ENCODE measurements at regions of chr9 and their contacts with region 1.

Region 1: DNA sequence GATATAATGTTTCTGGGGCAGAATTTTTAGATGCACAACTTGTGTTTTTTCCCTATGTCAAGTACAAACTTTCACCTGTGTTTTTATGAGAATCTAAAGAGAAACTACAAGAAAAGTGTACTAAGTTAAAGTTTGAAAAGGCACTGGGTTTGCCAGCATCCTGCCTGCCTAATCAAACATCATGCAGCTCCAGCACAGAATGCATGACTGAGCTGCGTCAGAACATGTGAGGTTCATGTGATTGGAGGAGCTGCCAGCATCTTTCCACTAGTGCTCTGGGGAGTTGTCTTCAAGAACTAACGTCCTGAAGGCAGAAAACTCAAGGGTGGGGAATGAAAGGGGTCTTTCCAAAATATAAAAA is 46.1 kb upstream of the RIC1 start:
- DNase-seq: peak in 3 of 5 donors; percentile 32 to 45 (median 36)
- ATAC-seq: peak; percentile 47 to 83 (median 69)
- H3K4me3 ChIP-seq: no peak overlapping the region
- H3K27ac ChIP-seq: peak overlapping the region in 3 of 12 donors; percentile 21 to 45 (median 23)
- H3K4me1 ChIP-seq: peaks cover 0 to 23% (median 14%) of the 10 kb centered on the region in 12 donors
- H3K27me3 ChIP-seq: no peaks in the 10 kb centered on the region
- CTCF ChIP-seq: no peak
- POLR2A ChIP-seq: no peak

Region 2: DNA sequence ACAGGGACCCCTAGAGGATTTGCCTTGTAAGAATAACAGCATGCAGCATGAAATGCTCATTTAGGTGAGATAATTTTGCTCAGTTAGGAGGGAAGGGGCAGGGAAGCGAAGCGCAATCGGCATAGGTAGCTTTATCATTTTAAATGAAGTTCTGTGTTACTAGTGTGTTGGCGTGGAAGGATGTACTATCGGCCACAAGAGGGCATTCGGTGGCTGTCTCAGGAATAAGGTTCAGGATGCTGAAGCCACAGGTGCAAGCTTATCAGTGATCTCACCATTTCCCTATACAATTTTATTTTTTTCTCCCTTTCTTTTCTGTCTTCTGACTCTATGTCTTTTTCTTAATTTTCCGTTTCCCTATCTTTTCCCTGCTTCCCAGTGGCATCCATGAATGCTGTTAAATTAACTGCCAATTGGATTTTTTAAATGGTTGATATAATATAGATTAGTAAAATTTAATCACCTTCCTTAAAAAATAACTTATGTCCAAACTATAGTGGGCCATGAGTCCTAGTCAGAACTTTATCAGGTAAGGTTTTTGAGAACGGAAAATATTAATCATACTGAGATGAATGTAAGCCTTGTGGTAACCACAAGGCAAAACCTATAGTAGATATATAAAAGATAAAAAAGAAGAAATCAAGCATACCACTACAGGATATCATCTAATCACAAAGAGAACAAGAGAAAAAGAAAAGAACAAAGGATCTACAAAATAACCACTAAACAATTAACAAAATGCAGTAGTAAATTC is 396.2 kb before region 1 on chr9:
- intact Hi-C with region 1: loop called in 1 of 10 experiments (anchors 5 kb)
- DNase-seq: peak in 3 of 5 donors; percentile 27 to 32 (median 29)
- ATAC-seq: peak in 3 of 4 donors; percentile 70 to 76 (median 70)
- H3K4me3 ChIP-seq: no peak overlapping the region
- H3K27ac ChIP-seq: no peak overlapping the region
- H3K4me1 ChIP-seq: no peaks in the 10 kb centered on the region
- H3K27me3 ChIP-seq: peaks cover 0 to 8% (median 0%) of the 10 kb centered on the region in 9 donors
- CTCF ChIP-seq: peak; percentile 44 to 74 (median 69)
- POLR2A ChIP-seq: no peak

Region 3: DNA sequence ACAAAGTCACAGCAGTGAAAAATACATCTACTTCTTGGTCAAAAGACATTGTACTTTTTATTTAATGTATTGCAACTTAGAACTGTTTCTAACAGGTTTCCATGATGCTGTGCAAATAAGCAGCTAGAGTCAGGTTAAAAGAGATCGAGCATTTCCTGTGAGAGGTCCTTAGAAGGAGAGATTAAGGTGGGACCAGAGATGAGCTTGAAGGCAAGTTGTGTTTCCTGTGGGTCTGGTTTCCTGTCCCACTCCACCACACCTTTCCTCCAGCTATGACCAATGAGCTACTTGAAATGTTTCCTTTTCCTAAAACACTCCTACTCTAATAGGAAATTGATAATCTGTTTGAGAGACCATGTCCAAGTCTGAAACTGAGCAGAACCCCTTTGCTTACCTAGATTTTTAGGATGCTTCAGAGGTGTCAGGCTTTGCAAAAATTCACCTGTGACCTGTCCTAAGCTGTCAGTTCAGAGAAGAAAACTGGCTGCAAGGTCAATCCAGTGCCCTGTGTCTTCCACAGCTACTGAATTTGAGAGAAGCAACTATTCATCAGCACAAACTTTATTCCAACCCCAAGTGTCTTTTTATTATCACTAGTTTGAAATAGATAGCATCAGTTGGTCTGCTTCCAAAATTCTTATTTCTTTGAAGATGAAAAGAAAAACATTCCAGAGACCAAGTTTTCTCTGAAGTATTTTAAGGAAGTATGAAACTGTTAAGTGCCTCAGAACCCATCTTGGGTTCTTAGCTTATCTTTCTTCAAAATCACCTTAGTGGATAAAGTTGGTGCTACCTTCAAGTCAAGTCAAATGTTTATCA is 230.0 kb before region 1 on chr9:
- intact Hi-C with region 1: loop called in 1 of 10 experiments (anchors 10 kb)
- DNase-seq: no peak
- ATAC-seq: no peak
- H3K4me3 ChIP-seq: no peak overlapping the region
- H3K27ac ChIP-seq: peak overlapping the region in 1 of 12 donors; percentile 12
- H3K4me1 ChIP-seq: peaks cover 0 to 20% (median 2%) of the 10 kb centered on the region in 12 donors
- H3K27me3 ChIP-seq: no peaks in the 10 kb centered on the region
- CTCF ChIP-seq: no peak
- POLR2A ChIP-seq: no peak

Region 4: DNA sequence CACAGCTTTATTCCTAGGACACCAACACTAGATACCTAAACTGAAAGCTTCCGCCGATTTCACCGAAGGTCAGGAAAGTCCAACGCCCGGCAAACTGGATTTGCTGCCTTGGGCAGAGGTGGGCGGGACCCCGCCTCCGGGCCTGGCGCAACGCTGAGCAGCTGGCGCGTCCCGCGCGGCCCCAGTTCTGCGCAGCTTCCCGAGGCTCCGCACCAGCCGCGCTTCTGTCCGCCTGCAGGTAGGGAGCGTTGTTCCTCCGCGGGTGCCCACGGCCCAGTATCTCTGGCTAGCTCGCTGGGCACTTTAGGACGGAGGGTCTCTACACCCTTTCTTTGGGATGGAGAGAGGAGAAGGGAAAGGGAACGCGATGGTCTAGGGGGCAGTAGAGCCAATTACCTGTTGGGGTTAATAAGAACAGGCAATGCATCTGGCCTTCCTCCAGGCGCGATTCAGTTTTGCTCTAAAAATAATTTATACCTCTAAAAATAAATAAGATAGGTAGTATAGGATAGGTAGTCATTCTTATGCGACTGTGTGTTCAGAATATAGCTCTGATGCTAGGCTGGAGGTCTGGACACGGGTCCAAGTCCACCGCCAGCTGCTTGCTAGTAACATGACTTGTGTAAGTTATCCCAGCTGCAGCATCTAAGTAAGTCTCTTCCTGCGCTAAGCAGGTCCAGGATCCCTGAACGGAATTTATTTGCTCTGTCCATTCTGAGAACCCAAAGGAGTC is 132.3 kb before region 1 on chr9 and contains the start of gene CD274:
- intact Hi-C with region 1: loop called in 2 of 10 experiments (anchors 5 kb)
- DNase-seq: peak; percentile 90 to 95 (median 94)
- ATAC-seq: peak; percentile 96 to 99 (median 98)
- H3K4me3 ChIP-seq: peak within 1 kb of the TSS; percentile 7 to 83 (median 66)
- H3K27ac ChIP-seq: peak within 1 kb of the TSS; percentile 6 to 97 (median 80)
- H3K4me1 ChIP-seq: peaks cover 0 to 85% (median 21%) of the 10 kb centered on the region in 12 donors
- H3K27me3 ChIP-seq: no peaks in the 10 kb centered on the region
- CTCF ChIP-seq: peak; percentile 53 to 88 (median 66)
- POLR2A ChIP-seq: no peak
- total RNA-seq, gene CD274: 11.6 to 54.4 (median 15.7) TPM

Region 5: GRCh38 chr9:5499889-5500398 is 82.9 kb before region 1 on chr9:
- intact Hi-C with region 1: loop called in 2 of 10 experiments (anchors 5 kb)
- DNase-seq: peak in 3 of 5 donors; percentile 35 to 65 (median 60)
- ATAC-seq: peak; percentile 55 to 69 (median 61)
- H3K4me3 ChIP-seq: no peak overlapping the region
- H3K27ac ChIP-seq: peak overlapping the region; percentile 62 to 95 (median 85)
- H3K4me1 ChIP-seq: peaks cover 5 to 42% (median 26%) of the 10 kb centered on the region in 12 donors
- H3K27me3 ChIP-seq: no peaks in the 10 kb centered on the region
- CTCF ChIP-seq: no peak
- POLR2A ChIP-seq: no peak

Region 6: GRCh38 chr9:5510360-5510931 is 72.4 kb before region 1 on chr9 and contains the start of gene PDCD1LG2:
- intact Hi-C with region 1: loop called in 1 of 10 experiments (anchors 5 kb)
- DNase-seq: no peak
- ATAC-seq: peak in 3 of 4 donors; percentile 27 to 63 (median 55)
- H3K4me3 ChIP-seq: peak within 1 kb of the TSS in 10 of 12 donors; percentile 7 to 58 (median 46)
- H3K27ac ChIP-seq: peak within 1 kb of the TSS; percentile 47 to 94 (median 63)
- H3K4me1 ChIP-seq: peaks cover 0 to 58% (median 41%) of the 10 kb centered on the region in 12 donors
- H3K27me3 ChIP-seq: no peaks in the 10 kb centered on the region
- CTCF ChIP-seq: no peak
- POLR2A ChIP-seq: no peak
- total RNA-seq, gene PDCD1LG2: 0.86 to 10.5 (median 1.4) TPM

Region 7: DNA sequence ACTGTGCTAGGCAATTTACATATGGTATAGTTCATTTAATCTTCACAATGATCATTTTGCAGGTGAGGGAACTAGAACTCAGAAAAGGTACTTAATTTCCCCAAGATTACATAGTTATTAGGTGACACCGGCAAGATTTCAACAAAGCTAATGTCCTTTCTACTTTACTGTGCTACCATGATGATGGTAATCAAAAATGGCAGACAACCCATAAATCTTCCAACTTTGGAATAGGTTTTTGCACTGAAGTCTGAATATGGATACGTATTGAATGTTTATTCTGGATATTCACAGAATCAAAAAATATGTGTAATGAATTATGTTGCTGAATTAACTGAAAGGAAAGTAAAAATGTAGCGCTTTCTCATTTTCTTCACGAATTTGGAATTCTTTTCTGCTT is 58.7 kb before region 1 on chr9:
- intact Hi-C with region 1: no loop called
- DNase-seq: no peak
- ATAC-seq: no peak
- H3K4me3 ChIP-seq: no peak overlapping the region
- H3K27ac ChIP-seq: no peak overlapping the region
- H3K4me1 ChIP-seq: peaks cover 0 to 10% (median 0%) of the 10 kb centered on the region in 12 donors
- H3K27me3 ChIP-seq: no peaks in the 10 kb centered on the region
- CTCF ChIP-seq: no peak
- POLR2A ChIP-seq: no peak

Region 8: GRCh38 chr9:5863092-5863746 is 280.4 kb after region 1 on chr9:
- intact Hi-C with region 1: no loop called
- DNase-seq: peak in 3 of 5 donors; percentile 32 to 47 (median 40)
- ATAC-seq: peak; percentile 85 to 90 (median 88)
- H3K4me3 ChIP-seq: no peak overlapping the region
- H3K27ac ChIP-seq: no peak overlapping the region
- H3K4me1 ChIP-seq: peaks cover 0 to 7% (median 0%) of the 10 kb centered on the region in 12 donors
- H3K27me3 ChIP-seq: no peaks in the 10 kb centered on the region
- CTCF ChIP-seq: no peak
- POLR2A ChIP-seq: no peak

Measured in heart left ventricle (tissue), 16 donors.